AG04449 (cell line): ENCODE measurements at regions of chr1 and their contacts with region 1.

Region 1: GRCh38 chr1:157992031-157992832 is 1.2 kb upstream of the KIRREL1 start:
- DNase-seq: no peak
- H3K4me3 ChIP-seq: no peak overlapping the region
- CTCF ChIP-seq: peak; percentile 95

Region 2: DNA sequence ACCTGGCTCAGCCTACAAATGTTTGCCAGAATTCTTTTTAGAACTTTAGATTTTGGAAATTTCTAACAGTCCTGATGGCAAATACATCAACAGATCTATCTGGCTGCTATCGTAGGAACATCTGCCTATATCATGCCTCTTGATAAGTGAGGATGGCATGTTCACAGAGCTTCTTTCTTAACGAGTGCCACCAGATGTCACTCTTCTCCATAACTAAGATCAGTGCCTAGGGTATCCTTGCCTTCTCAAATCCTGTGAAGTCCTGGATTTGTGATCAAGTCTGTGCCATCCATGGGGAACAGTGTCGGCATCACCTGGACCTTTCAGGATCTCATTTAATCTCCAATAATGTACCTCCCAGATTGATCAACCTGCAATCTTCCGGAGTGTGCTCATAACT is 114.2 kb before region 1 on chr1:
- CTCF ChIA-PET with region 1: no interaction called
- POLR2A ChIA-PET with region 1: no interaction called
- DNase-seq: no peak
- H3K4me3 ChIP-seq: no peak overlapping the region
- CTCF ChIP-seq: peak; percentile 35

Region 3: GRCh38 chr1:157963713-157964112 is 28.5 kb before region 1 on chr1:
- CTCF ChIA-PET with region 1: interaction called, 401 read pairs
- POLR2A ChIA-PET with region 1: interaction called, 8 read pairs
- DNase-seq: no peak
- H3K4me3 ChIP-seq: no peak overlapping the region
- CTCF ChIP-seq: peak; percentile 75

Region 4: DNA sequence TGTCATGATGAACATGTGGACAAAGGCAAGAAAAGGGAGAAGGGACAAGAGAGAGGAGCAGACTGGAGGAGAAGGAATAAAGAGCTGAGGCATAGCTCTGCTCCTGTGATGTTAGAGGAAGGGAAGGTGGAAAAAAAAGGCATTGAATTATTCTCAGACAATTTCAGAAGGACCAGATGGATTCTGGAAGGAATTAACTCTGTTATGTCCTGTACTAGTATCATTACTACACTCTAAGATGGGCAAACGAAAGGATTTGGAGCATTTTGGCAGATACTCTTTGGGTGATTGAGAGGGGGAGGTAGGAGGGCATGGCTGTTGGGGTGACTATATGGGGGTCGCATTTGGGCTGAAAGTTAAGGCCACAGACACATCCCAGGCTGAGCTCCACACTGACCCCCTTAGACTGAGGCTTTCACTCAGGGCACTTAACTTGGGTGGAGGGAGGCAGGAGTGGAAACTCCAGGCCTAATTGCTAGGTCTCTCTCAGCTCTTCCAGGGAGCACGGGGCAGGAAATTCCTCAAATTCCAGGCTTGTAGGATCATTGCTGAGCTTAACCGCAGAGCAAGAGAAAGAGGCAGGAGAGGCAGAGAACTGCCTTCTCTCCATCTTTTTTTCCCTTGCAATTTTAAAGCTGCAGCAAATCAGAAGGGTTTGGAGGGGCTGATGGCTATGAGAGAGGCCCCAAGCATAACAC is 27.1 kb after region 1 on chr1:
- CTCF ChIA-PET with region 1: interaction called, 94 read pairs
- POLR2A ChIA-PET with region 1: interaction called, 11 read pairs
- DNase-seq: peak; percentile 86
- H3K4me3 ChIP-seq: peak overlapping the region; percentile 41
- CTCF ChIP-seq: no peak

Region 5: DNA sequence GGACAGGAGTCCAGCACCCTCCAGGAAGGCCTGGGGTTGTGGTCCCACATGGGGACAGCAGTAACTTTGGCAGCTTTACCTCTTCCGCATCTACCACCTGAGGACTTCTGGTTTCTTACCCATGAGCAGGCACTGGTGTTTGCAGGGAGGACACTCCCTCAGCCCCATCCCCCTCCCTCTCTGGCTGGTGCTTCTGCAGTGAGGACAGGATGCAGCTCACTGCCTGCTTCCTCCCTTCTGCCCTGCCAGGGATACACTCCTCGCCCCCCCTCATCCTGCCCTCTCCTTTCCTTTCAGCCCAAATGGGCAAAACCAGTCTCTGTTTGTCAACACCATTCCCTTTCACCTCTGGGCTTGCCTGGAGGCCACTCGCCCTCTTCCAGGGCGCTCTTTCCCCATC is 63.6 kb after region 1 on chr1:
- CTCF ChIA-PET with region 1: interaction called, 108 read pairs
- POLR2A ChIA-PET with region 1: no interaction called
- DNase-seq: no peak
- H3K4me3 ChIP-seq: no peak overlapping the region
- CTCF ChIP-seq: no peak

Region 6: DNA sequence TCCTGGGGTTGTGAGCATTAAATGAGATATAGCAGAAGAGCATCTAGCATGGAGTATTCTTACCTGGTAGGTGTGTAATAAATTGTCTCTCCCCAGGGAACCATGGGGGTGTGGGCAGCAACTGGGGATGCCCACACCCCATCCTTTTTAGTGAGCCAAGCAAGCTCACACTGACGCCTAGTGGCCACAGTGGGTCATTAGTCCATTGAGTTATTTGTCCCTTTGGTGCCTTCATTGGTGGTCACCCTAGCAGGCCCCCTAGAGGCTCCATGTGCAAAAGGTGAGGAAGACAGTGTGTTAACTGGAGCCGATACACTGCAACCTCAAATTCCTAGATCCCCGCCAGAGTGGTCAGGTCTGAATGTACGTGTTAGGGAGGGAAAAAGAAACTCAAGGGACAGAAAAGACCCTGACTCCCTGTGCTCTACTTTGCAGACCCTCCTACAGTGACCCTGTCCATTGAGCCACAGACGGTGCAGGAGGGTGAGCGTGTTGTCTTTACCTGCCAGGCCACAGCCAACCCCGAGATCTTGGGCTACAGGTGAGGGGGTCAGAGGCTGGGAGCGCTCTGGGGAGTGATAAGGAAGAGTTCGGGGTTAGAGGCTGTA is 95.2 kb after region 1 on chr1:
- CTCF ChIA-PET with region 1: interaction called, 208 read pairs
- POLR2A ChIA-PET with region 1: no interaction called
- DNase-seq: peak; percentile 10
- H3K4me3 ChIP-seq: no peak overlapping the region
- CTCF ChIP-seq: peak; percentile 83

Region 7: DNA sequence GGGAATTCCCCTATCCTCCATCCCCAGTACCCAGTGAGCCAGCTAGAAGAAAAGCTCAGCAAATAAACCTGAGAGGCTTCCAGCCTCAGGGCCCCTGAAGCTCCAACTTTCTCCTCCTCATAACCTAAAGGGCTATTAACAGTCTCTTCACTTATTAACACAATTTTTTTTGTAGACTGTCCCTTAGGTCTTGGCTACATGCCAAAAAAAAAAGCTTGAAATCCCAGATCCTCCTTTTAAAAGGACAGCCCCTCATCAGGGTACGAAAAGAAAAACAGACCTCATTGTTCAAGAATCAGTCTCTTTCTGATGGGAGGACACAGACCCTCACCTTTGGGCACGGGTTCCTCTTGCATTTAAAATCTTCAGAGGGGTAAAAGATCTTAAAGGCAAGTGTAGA is 115.7 kb after region 1 on chr1:
- CTCF ChIA-PET with region 1: interaction called, 2,279 read pairs
- POLR2A ChIA-PET with region 1: no interaction called
- DNase-seq: no peak
- H3K4me3 ChIP-seq: no peak overlapping the region
- CTCF ChIP-seq: no peak